CD8-positive, alpha-beta T cell (primary cell): ENCODE measurements at regions of chr14 and their contacts with region 1.

Region 1: GRCh38 chr14:104694991-104695659 is 5.7 kb downstream of the INF2 start:
- DNase-seq: peak in 7 of 9 experiments; percentile 34 to 82 (median 56)
- ATAC-seq: peak; percentile 75
- H3K4me3 ChIP-seq: peak overlapping the region; percentile 7 to 17
- H3K4me3 Mint-ChIP-seq: peak overlapping the region; percentile 71
- H3K27ac ChIP-seq: peak overlapping the region; percentile 61 to 78
- H3K27ac Mint-ChIP-seq: peak overlapping the region; percentile 94
- H3K4me1 ChIP-seq: peaks cover 61% of the 10 kb centered on the region
- H3K4me1 Mint-ChIP-seq: peaks cover 45% of the 10 kb centered on the region
- H3K27me3 ChIP-seq: no peaks in the 10 kb centered on the region
- H3K27me3 Mint-ChIP-seq: no peaks in the 10 kb centered on the region
- CTCF ChIP-seq: no peak

Region 2: DNA sequence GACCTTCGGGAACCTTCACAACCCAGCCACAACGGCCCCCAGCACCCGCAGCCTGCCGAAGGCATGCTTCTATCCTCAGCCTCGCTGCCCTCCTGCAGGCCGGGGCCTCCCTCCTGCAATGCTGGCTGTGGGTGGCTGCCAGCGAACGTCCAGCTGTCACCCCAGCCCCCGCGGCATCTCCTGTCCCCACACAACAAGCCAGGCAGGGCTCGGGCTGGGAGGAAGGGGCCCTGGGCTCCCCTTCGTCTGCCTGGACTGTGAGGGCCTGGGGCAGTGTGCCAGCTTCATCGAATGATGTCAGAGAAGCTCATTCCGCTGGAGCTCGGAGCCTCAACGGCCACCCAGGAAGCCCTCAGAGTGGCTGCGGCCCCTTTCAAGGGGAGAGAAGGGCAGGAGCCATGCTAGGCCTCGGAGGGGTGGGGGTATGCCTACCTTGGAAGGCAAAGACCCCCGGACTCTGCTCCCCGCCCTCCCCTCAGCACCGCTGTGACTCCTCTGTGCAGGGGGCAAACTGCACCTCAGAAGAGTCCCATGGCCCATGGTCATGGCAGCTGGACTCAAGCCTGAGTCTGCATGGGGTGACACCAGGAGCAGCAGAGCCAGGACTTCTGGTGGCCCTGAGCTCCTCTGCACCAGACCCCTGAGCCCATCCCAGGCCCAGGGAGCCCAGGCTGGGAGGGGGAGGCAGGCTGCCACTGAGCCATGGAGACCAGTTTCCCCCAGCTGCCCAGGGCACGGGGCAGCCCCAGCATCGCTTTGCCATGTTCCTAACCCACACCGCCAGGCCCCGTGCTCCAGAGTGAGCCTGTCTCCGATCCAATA is 140.3 kb before region 1 on chr14:
- CTCF ChIA-PET with region 1: no interaction called
- POLR2A ChIA-PET with region 1: no interaction called
- intact Hi-C with region 1: no loop called
- DNase-seq: no peak
- ATAC-seq: no peak
- H3K4me3 ChIP-seq: no peak overlapping the region
- H3K4me3 Mint-ChIP-seq: no peak overlapping the region
- H3K27ac ChIP-seq: no peak overlapping the region
- H3K27ac Mint-ChIP-seq: no peak overlapping the region
- H3K4me1 ChIP-seq: no peaks in the 10 kb centered on the region
- H3K4me1 Mint-ChIP-seq: no peaks in the 10 kb centered on the region
- H3K27me3 ChIP-seq: no peaks in the 10 kb centered on the region
- H3K27me3 Mint-ChIP-seq: peaks cover 7% of the 10 kb centered on the region
- CTCF ChIP-seq: no peak

Region 3: DNA sequence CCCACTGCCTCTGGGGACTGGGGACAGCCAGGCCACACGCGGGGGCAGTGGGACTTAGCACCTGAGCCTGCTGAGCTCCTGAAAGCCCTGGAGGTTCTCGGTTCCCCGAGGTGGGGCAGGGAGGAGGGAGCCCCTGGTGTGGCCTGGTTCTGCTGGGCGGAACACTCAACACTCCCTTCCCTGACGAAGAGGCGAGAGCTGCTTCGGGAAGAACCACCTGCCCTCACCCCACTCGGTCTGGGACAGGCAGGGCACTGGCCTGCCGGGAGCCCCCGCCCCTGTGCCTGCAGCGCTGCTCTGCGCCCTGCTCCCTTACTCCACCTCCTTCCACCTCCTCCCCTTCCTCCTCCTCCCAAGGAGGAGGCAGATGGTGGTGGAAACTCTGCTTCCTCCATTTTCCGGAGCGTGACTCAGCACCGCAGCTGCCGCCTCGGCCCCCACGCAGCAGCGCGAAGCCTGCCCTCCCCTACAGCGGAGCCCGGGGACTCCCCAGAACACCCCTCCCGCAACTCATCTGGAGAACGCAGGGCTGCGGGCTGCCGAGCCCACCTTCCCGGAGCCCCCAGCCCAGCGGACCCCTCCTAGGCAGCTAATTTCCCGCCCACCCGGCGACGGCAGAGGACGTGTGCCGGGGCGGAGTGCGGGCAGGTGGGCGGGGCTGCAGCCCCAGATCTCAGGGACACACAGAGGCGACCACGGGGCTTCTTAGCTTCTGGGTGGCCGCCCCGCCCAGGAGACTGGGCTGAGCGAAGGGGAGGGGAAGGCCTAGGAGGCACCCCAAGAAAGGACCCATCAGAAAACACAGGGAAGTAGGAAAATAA is 17.4 kb before region 1 on chr14:
- CTCF ChIA-PET with region 1: interaction called, 4 read pairs
- POLR2A ChIA-PET with region 1: interaction called, 7 read pairs
- intact Hi-C with region 1: loop called in 1 of 2 experiments (anchors 2 kb)
- DNase-seq: peak in 8 of 9 experiments; percentile 42 to 80 (median 64)
- ATAC-seq: peak; percentile 83
- H3K4me3 ChIP-seq: peak overlapping the region; percentile 63 to 73
- H3K4me3 Mint-ChIP-seq: peak overlapping the region; percentile 81
- H3K27ac ChIP-seq: no peak overlapping the region
- H3K27ac Mint-ChIP-seq: peak overlapping the region; percentile 67
- H3K4me1 ChIP-seq: peaks cover 17% of the 10 kb centered on the region
- H3K4me1 Mint-ChIP-seq: peaks cover 15% of the 10 kb centered on the region
- H3K27me3 ChIP-seq: peaks cover 0 to 9% of the 10 kb centered on the region in 2 experiments
- H3K27me3 Mint-ChIP-seq: no peaks in the 10 kb centered on the region
- CTCF ChIP-seq: no peak

Region 4: DNA sequence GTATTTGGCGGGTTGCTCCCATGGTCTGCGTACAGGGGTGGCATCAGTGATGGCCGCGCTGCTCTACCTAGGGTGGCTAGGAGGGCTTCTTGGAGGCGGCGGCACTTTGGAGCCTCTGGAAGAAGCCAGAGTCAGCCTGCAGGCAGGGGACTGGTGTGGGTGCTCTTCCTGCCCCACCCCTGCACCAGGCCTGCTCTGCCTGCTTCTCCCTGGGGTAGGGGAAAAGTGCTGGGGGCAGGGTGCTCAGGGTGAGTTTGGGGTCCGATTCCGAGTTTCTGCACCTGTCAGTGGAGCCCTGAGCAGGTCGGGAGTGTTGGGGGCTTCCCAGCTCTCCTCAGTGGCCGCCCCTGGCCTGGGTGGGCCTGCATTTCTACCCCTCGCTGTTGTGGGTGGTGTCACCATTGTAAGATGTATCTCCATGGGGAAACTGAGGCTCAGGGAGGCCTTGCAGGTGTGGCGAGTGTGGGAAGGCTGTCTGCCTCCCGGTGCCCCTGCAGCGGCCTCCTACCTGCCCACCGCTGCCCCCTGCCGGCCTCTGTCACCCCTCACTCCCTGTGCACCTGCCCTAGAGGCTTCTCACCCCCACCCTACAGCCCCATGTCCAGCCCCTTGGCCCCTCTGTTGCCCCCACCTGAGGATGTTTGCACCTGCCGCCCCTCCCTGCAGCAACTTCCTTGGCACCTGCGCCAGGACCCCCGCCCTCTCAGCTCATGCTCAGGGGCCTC is 175.5 kb after region 1 on chr14:
- CTCF ChIA-PET with region 1: no interaction called
- POLR2A ChIA-PET with region 1: no interaction called
- intact Hi-C with region 1: no loop called
- DNase-seq: peak in 8 of 9 experiments; percentile 16 to 58 (median 49)
- ATAC-seq: peak; percentile 66
- H3K4me3 ChIP-seq: no peak overlapping the region
- H3K4me3 Mint-ChIP-seq: no peak overlapping the region
- H3K27ac ChIP-seq: no peak overlapping the region
- H3K27ac Mint-ChIP-seq: no peak overlapping the region
- H3K4me1 ChIP-seq: peaks cover 8% of the 10 kb centered on the region
- H3K4me1 Mint-ChIP-seq: peaks cover 3% of the 10 kb centered on the region
- H3K27me3 ChIP-seq: peaks cover 8 to 18% of the 10 kb centered on the region in 2 experiments
- H3K27me3 Mint-ChIP-seq: peaks cover 18% of the 10 kb centered on the region
- CTCF ChIP-seq: no peak